ENCODE measurements at regions of chr10 and their contacts with region 1.

Region 1: GRCh38 chr10:70115948-70116682 is 16.5 kb downstream of the AIFM2 start:
- DNase-seq: peak; percentile 25 to 48 (median 45)
- H3K4me3 ChIP-seq: no peak overlapping the region
- H3K27ac ChIP-seq: no peak overlapping the region
- H3K4me1 ChIP-seq: peaks cover 0 to 1% (median 0%) of the 10 kb centered on the region in 4 experiments
- H3K27me3 ChIP-seq: peaks cover 0 to 8% (median 0%) of the 10 kb centered on the region in 5 experiments

Region 2: GRCh38 chr10:69957886-69958555 is 158.1 kb before region 1 on chr10:
- CTCF ChIA-PET with region 1: no interaction called
- POLR2A ChIA-PET with region 1: no interaction called
- DNase-seq: peak; percentile 35 to 62 (median 61)
- H3K4me3 ChIP-seq: no peak overlapping the region
- H3K27ac ChIP-seq: no peak overlapping the region
- H3K4me1 ChIP-seq: peaks cover 3 to 33% (median 20%) of the 10 kb centered on the region in 4 experiments
- H3K27me3 ChIP-seq: peaks cover 0 to 8% (median 0%) of the 10 kb centered on the region in 5 experiments

Region 3: DNA sequence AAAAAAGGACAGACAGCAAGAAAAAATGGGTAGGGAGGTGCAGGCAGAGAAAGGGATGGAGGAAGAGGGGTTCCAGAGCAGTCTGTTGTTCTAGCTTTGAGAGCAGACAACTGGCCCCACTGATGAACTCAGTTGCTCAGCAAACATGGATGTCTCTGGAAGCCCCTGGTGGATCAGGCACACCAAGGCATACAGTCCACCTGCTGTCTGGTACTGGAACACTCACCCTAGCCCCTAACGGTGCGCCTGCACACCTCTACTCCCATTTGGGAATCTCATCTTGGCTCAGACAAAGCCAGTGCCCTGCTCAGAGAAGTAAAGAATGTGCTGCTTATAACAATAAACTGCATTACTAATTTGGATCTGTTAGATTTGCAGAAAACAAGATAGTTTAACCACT is 55.7 kb before region 1 on chr10:
- CTCF ChIA-PET with region 1: no interaction called
- POLR2A ChIA-PET with region 1: no interaction called
- DNase-seq: no peak
- H3K4me3 ChIP-seq: no peak overlapping the region
- H3K27ac ChIP-seq: no peak overlapping the region
- H3K4me1 ChIP-seq: peaks cover 0 to 3% (median 0%) of the 10 kb centered on the region in 4 experiments
- H3K27me3 ChIP-seq: no peaks in the 10 kb centered on the region

Region 4: DNA sequence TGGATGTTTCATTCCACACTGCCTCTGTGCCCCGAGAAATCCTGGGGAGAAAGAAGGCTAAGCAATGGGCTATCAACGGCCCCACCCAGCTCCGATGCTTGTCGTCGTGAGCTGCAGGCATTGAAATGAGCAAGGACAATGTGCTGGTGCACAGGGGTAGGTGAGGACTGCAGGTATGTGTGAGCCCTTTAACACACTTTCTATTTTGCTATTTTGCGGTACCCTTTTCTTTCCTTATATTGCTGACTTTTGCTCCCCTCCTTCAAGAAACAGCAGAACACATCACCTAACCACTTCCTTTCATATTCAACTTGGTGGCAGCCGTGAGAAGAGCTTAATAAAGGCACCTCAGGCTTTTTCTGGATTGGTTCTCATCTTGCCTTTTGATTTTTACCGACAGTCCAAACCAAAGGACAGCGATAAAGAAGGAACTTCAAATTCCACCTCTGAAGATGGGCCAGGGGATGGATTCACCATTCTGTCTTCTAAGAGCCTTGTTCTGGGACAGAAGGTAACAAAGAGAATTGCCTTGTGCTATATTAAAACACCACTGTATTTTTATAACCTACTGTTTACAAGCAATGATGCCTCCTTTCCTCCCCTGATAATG is 22.7 kb before region 1 on chr10:
- CTCF ChIA-PET with region 1: interaction called, 11 read pairs
- POLR2A ChIA-PET with region 1: no interaction called
- DNase-seq: peak in 2 of 3 donors; percentile 18 to 26
- H3K4me3 ChIP-seq: no peak overlapping the region
- H3K27ac ChIP-seq: no peak overlapping the region
- H3K4me1 ChIP-seq: peaks cover 0 to 8% (median 1%) of the 10 kb centered on the region in 4 experiments
- H3K27me3 ChIP-seq: no peaks in the 10 kb centered on the region

Region 5: GRCh38 chr10:70130878-70131559 is 14.9 kb after region 1 on chr10:
- CTCF ChIA-PET with region 1: interaction called, 18 read pairs
- POLR2A ChIA-PET with region 1: no interaction called
- DNase-seq: no peak
- H3K4me3 ChIP-seq: no peak overlapping the region
- H3K27ac ChIP-seq: no peak overlapping the region
- H3K4me1 ChIP-seq: peaks cover 0 to 21% (median 19%) of the 10 kb centered on the region in 4 experiments
- H3K27me3 ChIP-seq: peaks cover 0 to 25% (median 13%) of the 10 kb centered on the region in 5 experiments

Region 6: GRCh38 chr10:70139151-70139996 is 23.3 kb after region 1 on chr10:
- CTCF ChIA-PET with region 1: interaction called, 92 read pairs
- POLR2A ChIA-PET with region 1: no interaction called
- DNase-seq: no peak
- H3K4me3 ChIP-seq: no peak overlapping the region
- H3K27ac ChIP-seq: no peak overlapping the region
- H3K4me1 ChIP-seq: peaks cover 0 to under 1% (median 0%) of the 10 kb centered on the region in 4 experiments
- H3K27me3 ChIP-seq: peaks cover 0 to 8% (median 0%) of the 10 kb centered on the region in 5 experiments

Region 7: DNA sequence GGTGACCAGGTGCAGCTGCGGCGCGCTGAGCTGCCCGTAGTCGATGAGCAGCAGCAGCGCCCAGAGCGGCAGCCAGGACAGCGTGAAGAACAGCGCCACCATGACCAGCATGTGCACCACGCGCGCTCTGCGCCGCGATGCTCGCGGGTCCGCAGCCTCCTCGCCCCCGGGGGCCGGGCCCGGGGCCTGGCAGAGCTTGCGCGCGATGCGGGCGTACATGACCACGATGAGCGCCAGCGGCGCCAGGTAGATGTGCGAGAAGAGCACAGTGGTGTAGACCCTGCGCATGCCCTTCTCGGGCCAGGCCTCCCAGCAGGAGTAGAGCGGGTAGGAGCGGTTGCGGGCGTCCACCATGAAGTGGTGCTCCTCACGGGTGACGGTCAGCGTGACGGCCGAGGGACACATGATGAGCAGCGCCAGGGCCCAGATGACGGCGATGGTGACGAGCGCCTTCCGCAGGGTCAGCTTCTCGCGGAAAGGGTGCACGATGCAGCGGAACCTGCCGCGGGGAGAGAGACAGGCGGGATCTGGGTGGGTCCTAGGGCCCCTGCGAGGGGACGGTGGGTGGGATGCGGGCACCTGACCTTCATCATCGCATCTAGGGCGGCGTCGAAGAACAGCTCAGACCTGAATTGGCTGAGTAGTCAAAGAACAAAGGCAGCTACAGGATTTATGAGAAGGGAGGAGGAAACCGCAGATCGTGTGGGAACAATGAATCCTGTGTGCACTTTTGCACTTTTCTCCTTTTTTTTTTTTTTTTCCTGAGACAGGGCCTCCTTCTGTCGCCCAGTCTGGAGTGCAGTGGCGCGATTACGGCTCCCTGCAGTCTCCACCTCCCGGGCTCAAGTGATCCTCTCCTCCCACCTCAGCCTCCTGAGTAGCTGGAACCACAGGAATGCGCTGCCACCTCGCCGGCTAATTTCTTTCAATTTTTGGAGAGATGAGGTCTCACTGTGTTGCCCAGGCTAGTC is 139.5 kb after region 1 on chr10:
- CTCF ChIA-PET with region 1: no interaction called
- POLR2A ChIA-PET with region 1: no interaction called
- DNase-seq: peak in 2 of 3 donors; percentile 38 to 47
- H3K4me3 ChIP-seq: peak overlapping the region in 3 of 7 experiments; percentile 28 to 51 (median 43)
- H3K27ac ChIP-seq: no peak overlapping the region
- H3K4me1 ChIP-seq: peaks cover 0 to 14% (median 11%) of the 10 kb centered on the region in 4 experiments
- H3K27me3 ChIP-seq: peaks cover 3 to 68% (median 40%) of the 10 kb centered on the region in 5 experiments

Region 8: GRCh38 chr10:70410608-70411007 is 294.5 kb after region 1 on chr10:
- CTCF ChIA-PET with region 1: no interaction called
- POLR2A ChIA-PET with region 1: no interaction called
- DNase-seq: no peak
- H3K4me3 ChIP-seq: no peak overlapping the region
- H3K27ac ChIP-seq: no peak overlapping the region
- H3K4me1 ChIP-seq: peaks cover 7 to 9% (median 9%) of the 10 kb centered on the region in 4 experiments
- H3K27me3 ChIP-seq: no peaks in the 10 kb centered on the region